Activated CD8-positive, alpha-beta T cell treated with anti-CD3 and anti-CD28 coated beads for 36 hours (primary cell): ENCODE measurements at regions of chr12 and their contacts with region 1.

Region 1: GRCh38 chr12:4148418-4149056 is 125.0 kb upstream of the CCND2 start:
- DNase-seq: peak; percentile 80
- ATAC-seq: peak; percentile 7
- H3K4me3 Mint-ChIP-seq: no peak overlapping the region
- H3K27ac Mint-ChIP-seq: peak overlapping the region; percentile 90
- H3K4me1 Mint-ChIP-seq: peaks cover 87% of the 10 kb centered on the region
- H3K27me3 Mint-ChIP-seq: no peaks in the 10 kb centered on the region
- CTCF ChIP-seq: no peak

Region 2: GRCh38 chr12:4118017-4118510 is 30.5 kb before region 1 on chr12:
- CTCF ChIA-PET with region 1: interaction called, 24 read pairs
- POLR2A ChIA-PET with region 1: interaction called, 23 read pairs
- intact Hi-C with region 1: no loop called
- DNase-seq: no peak
- ATAC-seq: peak; percentile 5
- H3K4me3 Mint-ChIP-seq: peak overlapping the region; percentile 56
- H3K27ac Mint-ChIP-seq: peak overlapping the region; percentile 90
- H3K4me1 Mint-ChIP-seq: peaks cover 58% of the 10 kb centered on the region
- H3K27me3 Mint-ChIP-seq: no peaks in the 10 kb centered on the region
- CTCF ChIP-seq: no peak

Region 3: GRCh38 chr12:4135919-4136605 is 12.5 kb before region 1 on chr12:
- CTCF ChIA-PET with region 1: interaction called, 3 read pairs
- POLR2A ChIA-PET with region 1: interaction called, 10 read pairs
- intact Hi-C with region 1: no loop called
- DNase-seq: peak; percentile 94
- ATAC-seq: peak; percentile 83
- H3K4me3 Mint-ChIP-seq: peak overlapping the region; percentile 31
- H3K27ac Mint-ChIP-seq: peak overlapping the region; percentile 95
- H3K4me1 Mint-ChIP-seq: peaks cover 62% of the 10 kb centered on the region
- H3K27me3 Mint-ChIP-seq: no peaks in the 10 kb centered on the region
- CTCF ChIP-seq: no peak

Region 4: DNA sequence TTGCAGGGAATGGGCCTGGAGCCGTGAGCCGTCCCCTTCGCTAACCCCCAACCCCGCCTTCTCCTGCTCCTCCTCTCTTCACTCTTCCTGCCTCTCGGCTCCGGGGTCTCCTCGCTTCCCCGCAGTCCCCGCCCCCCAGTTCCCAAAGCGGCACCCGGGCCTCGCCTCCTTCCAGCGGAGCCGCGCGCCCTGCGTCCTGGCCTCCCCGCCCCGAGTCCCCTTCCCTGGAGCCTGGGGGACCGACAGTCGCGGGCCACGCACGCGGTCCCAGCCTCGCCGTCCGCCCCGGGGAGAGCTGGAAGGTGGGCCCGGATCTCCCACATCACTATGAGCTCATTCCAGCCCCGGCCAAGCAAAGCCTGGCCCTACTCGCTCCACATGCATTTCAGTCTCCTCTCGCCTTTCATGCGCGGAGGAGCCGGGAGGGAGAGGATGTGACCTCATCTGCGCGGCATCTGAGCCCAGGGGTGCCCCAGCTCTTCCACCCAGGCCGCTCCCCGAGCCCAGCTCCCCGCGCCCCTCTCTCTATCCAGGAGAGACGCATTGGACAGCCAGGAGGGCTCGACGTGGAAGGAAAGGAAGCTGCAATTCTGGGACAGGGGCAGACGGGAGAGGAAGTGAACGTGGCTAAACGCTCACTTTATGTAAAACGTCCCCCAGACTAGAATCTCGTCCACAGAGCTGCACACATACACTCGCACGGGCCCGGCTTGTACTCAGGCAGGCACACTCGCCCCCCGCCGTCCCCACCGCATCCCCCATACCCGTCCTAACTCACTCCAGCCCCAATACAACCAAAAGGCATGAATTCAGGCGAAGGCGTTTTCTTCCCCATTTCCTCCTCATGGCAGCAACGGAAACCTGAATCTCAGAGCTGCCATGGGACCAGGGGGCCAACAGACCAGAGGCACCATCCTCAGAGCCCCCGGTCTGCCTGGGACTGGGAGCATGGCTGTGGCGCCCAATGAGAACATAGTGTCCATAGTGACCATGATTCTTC is 16.3 kb after region 1 on chr12:
- CTCF ChIA-PET with region 1: interaction called, 15 read pairs
- POLR2A ChIA-PET with region 1: interaction called, 38 read pairs
- intact Hi-C with region 1: no loop called
- DNase-seq: peak; percentile 81
- ATAC-seq: peak; percentile 89
- H3K4me3 Mint-ChIP-seq: peak overlapping the region; percentile 76
- H3K27ac Mint-ChIP-seq: peak overlapping the region; percentile 97
- H3K4me1 Mint-ChIP-seq: peaks cover 39% of the 10 kb centered on the region
- H3K27me3 Mint-ChIP-seq: peaks cover 3% of the 10 kb centered on the region
- CTCF ChIP-seq: no peak

Region 5: DNA sequence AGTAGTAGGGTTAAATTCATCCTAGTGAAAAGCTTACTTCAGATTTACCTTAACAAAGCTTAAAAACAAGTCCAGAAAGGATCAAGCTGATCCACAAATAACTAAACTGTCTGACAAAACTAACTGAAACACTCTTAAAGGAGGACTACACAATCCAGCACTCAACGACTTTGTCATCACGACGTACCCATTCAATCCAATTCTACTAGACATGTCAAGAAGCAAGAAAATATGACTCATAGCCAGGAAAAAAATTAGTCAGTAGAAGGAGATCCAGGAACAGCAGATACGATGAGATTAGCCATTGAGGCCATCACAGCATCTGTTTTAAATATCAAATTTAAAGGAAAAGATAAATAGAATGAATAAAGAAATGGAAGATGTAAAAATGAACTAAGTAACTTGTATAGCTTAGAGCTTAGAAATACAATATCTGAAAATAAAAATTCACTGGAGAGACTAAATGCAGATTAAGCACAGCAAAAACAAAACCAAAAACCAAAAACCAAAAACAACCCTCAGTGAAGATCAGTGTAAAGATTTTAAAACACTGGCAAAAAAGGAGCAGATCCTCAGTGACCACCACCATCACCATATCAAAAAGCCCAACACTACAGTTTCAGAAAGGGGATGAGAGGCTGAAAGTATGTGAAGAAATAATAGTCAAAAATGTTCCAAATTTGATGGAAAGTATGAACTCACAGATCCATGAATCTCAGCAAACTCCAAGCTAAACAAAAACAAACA is 30.1 kb after region 1 on chr12:
- CTCF ChIA-PET with region 1: interaction called, 10 read pairs
- POLR2A ChIA-PET with region 1: interaction called, 3 read pairs
- intact Hi-C with region 1: no loop called
- DNase-seq: peak; percentile 44
- ATAC-seq: peak; percentile 90
- H3K4me3 Mint-ChIP-seq: no peak overlapping the region
- H3K27ac Mint-ChIP-seq: peak overlapping the region; percentile 19
- H3K4me1 Mint-ChIP-seq: peaks cover 20% of the 10 kb centered on the region
- H3K27me3 Mint-ChIP-seq: no peaks in the 10 kb centered on the region
- CTCF ChIP-seq: no peak

Region 6: DNA sequence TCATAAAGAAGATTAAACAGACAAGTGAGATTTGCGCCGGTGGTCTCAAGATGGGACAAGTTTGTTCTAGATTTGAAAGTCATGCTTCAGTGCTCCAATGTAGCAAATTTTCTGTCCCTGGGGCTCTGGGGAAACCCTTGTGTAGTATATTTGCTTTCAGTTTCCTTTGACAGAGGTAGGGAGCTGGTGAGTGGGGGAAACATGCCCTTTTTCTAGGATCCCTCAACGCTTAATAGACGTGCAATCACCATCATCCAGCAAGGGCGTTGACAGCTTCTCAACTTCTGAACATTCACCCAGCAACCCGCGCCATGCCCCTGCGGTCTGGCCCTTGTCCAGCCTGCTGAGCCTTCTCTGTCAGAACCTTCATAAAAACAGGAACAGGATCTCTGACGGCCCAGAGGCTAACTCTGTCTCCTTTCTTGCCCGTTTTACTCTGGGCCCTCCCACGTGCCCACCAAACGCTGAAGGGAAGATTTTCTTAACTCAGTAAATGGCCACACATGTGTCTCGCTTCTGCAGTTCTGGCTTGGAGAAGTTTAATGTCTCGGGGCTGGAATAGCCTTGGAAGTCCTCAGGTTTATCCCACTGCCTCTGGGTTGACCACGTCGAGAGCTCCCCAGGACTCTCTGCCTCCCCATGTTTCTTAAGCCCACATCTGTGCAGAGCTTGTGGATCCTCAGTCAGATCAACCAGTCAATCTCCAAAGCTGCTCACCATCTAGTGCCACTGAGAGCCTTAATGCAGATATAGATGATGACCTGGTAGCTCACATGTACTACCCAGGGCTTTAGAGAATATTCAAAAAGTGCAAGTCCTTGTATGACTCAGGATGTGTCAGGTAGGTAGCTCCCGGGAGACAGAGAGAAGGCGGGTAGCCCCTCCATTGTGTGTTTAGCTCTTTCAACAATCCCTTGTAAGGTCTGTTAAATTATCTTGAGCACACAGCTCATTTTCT is 67.0 kb after region 1 on chr12:
- CTCF ChIA-PET with region 1: interaction called, 8 read pairs
- POLR2A ChIA-PET with region 1: interaction called, 3 read pairs
- intact Hi-C with region 1: loop called (anchors 5 kb)
- DNase-seq: peak; percentile 73
- ATAC-seq: peak; percentile 82
- H3K4me3 Mint-ChIP-seq: peak overlapping the region; percentile 50
- H3K27ac Mint-ChIP-seq: peak overlapping the region; percentile 86
- H3K4me1 Mint-ChIP-seq: peaks cover 37% of the 10 kb centered on the region
- H3K27me3 Mint-ChIP-seq: no peaks in the 10 kb centered on the region
- CTCF ChIP-seq: no peak

Region 7: GRCh38 chr12:4269279-4269991 is 120.9 kb after region 1 on chr12:
- CTCF ChIA-PET with region 1: interaction called, 12 read pairs
- POLR2A ChIA-PET with region 1: interaction called, 375 read pairs
- intact Hi-C with region 1: loop called (anchors 2 kb)
- DNase-seq: peak; percentile 96
- ATAC-seq: peak; percentile 22
- H3K4me3 Mint-ChIP-seq: peak overlapping the region; percentile 100
- H3K27ac Mint-ChIP-seq: peak overlapping the region; percentile 99
- H3K4me1 Mint-ChIP-seq: peaks cover 19% of the 10 kb centered on the region
- H3K27me3 Mint-ChIP-seq: no peaks in the 10 kb centered on the region
- CTCF ChIP-seq: peak; percentile 32